ENCODE measurements at regions of chr5 and their contacts with region 1.

Region 1: GRCh38 chr5:88792144-88792840 is 90.7 kb downstream of the MEF2C start:
- DNase-seq: peak; percentile 63
- ATAC-seq: peak; percentile 84
- H3K4me3 ChIP-seq: no peak overlapping the region
- H3K27ac ChIP-seq: peak overlapping the region; percentile 47
- H3K4me1 ChIP-seq: peaks cover 20% of the 10 kb centered on the region
- H3K27me3 ChIP-seq: no peaks in the 10 kb centered on the region
- CTCF ChIP-seq: no peak

Region 2: DNA sequence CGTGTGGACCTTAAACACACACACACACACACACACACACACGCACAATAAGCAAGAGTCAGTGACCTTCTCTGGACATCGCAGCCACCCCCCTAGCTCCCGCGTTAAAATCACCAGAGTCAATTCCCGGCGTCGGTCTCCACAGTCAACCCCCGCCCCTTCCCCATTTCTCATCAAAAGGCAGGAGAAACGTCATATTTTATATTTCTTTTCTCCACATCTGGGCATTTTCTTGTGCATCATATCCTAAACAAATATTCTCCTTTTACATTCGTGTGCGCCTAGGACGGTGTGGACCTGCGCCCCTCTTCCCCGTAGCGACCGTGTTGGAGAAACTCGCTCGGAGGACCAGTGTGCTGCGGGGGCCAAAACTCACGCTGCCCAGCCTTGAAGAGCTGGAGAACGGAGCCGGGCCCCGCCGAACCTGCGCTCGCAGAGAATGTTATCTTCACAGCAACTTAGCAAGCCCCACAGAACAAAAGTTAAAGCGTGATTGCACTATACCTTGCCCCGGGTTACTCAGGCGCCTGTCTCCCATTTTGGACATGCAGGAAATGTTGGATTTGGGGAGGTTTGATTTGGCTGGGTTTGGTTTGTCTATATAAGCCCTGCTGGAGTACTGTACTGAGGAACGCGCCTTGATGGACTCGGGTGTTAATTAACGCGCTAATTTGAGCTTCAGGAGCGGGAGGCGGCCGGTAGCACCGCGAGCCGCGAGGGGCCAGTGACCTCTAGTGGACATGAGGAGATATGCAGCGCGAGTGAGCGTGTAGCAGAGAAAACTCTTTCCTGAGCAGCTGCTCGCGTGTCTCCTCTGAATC is 101.7 kb before region 1 on chr5:
- CTCF ChIA-PET with region 1: no interaction called
- POLR2A ChIA-PET with region 1: no interaction called
- intact Hi-C with region 1: no loop called
- DNase-seq: peak; percentile 66
- ATAC-seq: peak; percentile 75
- H3K4me3 ChIP-seq: peak overlapping the region; percentile 70
- H3K27ac ChIP-seq: no peak overlapping the region
- H3K4me1 ChIP-seq: peaks cover 16% of the 10 kb centered on the region; the same call in 1 of the 2 replicates
- H3K27me3 ChIP-seq: peaks cover 41% of the 10 kb centered on the region
- CTCF ChIP-seq: peak; percentile 97

Region 3: DNA sequence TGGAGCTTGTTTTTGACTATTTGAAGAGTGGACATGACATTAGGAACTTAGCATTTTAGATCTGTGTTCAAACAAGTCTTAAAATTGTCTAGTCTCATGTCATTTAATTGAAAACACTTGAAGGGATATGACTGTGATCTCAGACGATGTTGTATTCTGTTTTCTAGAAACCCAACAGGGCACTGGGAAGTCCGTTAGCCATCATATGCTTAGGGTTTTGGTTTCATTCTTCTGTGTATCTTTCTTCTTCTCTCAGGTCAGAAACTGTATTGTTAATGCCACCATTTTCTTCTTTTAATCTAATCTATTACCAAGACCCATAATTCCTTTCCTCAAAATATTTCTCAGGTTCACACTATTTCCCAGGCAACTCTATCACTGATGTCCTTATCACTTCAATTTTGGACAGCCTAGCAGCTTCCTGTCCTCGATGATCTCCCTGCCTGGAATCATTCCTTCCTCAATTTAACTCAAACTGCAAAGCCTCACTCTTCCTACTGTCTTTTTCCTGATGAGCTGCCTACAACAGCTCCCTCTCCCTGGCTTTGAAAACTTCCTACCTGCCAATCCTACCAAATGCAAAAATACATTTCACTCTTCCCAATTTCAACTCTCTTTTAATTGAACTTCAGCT is 13.0 kb after region 1 on chr5:
- CTCF ChIA-PET with region 1: no interaction called
- POLR2A ChIA-PET with region 1: interaction called, 24 read pairs
- intact Hi-C with region 1: no loop called
- DNase-seq: no peak
- ATAC-seq: no peak
- H3K4me3 ChIP-seq: no peak overlapping the region
- H3K27ac ChIP-seq: no peak overlapping the region
- H3K4me1 ChIP-seq: no peaks in the 10 kb centered on the region
- H3K27me3 ChIP-seq: no peaks in the 10 kb centered on the region
- CTCF ChIP-seq: no peak

Region 4: DNA sequence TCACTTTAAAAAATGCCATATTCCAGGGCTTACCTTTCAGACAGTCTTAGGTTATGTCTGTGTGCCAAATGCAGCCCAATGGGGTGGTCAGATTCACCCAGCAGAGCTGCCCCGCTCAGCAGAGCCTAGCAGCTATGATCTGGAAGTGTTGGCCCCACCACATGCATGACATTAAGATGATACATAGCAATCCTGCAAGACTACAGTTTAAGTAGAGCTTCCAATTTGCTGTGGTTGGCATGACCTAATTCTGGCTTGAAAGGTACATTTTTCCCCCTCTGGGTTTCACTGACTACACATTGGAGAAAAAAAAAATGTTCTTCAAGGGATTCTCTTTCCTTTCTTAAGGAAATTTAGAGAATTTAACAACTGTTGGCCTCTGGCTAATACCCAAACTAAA is 68.2 kb after region 1 on chr5:
- CTCF ChIA-PET with region 1: no interaction called
- POLR2A ChIA-PET with region 1: no interaction called
- intact Hi-C with region 1: no loop called
- DNase-seq: no peak
- ATAC-seq: no peak
- H3K4me3 ChIP-seq: no peak overlapping the region
- H3K27ac ChIP-seq: no peak overlapping the region
- H3K4me1 ChIP-seq: no peaks in the 10 kb centered on the region
- H3K27me3 ChIP-seq: no peaks in the 10 kb centered on the region
- CTCF ChIP-seq: no peak

Measured in PC-3 (cell line).